Psoas muscle (tissue), 8 donors: ENCODE measurements at regions of chr2 and their contacts with region 1.

Region 1: DNA sequence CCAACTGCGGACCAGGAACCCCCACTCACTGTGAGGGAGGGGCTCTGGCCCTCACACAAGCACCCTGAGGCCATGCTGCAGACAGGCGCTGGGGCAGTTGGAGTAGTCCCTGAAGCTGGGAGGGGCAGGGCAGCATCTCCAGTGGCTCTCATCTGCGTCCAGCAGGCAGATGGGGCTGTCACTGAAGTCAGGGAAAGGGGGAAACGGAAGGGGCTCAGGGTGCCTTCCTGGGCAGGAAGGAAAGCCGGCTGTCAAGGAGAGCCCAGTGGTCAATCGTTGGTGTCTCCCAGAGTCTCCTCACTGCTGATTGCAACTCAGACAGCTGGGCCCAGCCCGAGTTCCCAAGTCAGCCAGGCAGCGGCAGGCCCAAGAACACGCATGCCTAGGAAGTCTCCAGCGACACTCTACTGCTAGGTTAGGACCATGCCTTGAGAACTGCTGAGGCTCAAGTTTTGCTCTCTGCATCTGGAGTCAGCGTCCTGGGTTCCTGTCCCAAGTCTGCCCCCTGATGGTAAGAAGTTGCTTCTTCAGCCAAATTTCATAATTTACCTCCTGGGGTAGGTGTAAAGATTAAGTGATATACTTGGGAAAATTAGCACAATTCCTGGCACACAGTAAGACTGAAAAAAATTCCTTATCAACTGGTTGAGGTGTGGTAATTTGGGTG is 27.5 kb upstream of the NMUR1 start:
- DNase-seq: peak; percentile 36 to 86
- ATAC-seq: peak; percentile 92 to 98 (median 96)
- H3K4me3 ChIP-seq: no peak overlapping the region
- H3K27ac ChIP-seq: peak overlapping the region; percentile 36
- H3K4me1 ChIP-seq: peaks cover 3% of the 10 kb centered on the region
- H3K27me3 ChIP-seq: no peaks in the 10 kb centered on the region
- CTCF ChIP-seq: peak; percentile 74

Region 2: DNA sequence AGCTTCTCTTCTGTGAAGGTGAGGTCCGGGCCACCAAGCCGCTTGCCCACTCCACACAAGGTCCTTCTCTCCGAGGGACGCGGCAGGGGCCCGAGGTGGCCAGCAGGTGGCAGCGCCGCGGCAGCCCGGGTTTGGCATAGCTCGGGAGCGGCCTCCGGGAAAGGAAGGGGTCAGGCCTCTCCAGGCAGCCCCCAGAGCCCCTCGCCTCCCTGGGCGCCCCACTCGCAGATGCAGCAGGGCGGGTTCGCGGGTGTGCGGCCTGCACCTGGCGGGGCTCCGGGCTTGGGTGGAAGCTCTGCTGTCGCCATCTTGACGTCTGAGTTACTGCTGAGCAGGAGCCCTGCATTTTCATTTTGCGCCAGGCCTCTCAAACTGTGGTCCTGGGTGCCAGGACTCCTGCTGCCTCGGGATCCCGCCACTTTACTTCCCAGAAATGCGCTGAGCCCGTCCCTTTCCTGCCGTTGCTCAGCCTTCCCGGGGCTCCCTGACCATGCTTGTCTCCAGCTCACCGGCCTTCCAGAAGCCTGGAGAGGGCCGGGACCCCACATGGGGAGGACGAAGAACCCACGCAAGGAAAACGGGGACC is 74.8 kb before region 1 on chr2:
- intact Hi-C with region 1: loop called (anchors 2 to 5 kb)
- DNase-seq: peak; percentile 81 to 88
- ATAC-seq: peak; percentile 91 to 99 (median 94)
- H3K4me3 ChIP-seq: peak overlapping the region; percentile 77
- H3K27ac ChIP-seq: peak overlapping the region; percentile 72
- H3K4me1 ChIP-seq: no peaks in the 10 kb centered on the region
- H3K27me3 ChIP-seq: no peaks in the 10 kb centered on the region
- CTCF ChIP-seq: peak; percentile 93

Region 3: DNA sequence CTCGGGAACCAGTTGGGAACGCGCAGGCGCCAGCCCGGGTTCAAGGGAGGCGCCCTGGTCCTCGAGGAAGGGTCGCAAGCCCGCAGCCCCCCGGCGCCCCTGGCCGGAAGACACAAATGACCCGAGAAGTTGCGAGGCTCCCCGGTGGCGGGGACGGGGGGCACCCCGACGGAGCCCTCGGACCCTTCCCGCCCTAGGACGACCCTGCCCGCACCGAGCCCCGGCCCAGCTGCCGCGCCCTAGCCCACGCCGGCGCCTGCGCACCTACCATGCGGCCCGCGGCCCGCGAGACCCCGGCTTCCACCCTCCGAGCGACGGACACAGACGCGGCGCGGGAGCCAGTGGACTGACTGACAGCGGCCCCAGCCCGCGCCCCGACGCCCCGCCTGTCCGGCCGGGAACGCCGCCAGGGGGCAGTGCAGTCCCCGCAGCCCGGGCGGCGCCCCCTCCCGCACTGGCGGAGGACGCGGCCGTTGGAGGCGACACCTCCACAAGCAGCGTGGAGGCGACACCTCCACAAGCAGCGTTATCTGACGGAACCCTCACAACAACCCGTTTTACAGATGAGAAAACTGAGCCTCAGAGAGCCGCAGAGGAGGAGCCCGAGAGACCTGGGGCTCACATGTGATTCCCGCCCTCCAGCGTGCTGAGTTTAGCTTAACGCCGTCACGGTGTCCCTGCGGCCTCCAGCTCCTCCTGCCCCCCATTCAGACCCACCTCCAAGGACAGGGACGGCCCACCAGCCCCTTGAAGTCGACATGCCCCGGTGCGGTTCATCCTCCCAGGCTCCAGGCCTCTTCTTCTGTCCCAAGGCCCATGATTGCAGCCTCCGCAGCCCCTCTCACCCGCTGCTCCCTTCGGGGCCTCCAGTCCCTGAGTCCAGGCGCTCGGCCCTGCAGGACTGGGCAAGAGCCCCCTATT is 27.4 kb before region 1 on chr2 and contains the start of gene NMUR1:
- intact Hi-C with region 1: loop called in 1 of 2 experiments (anchors 2 kb)
- DNase-seq: peak; percentile 69 to 82
- ATAC-seq: peak; percentile 74 to 92 (median 86)
- H3K4me3 ChIP-seq: peak within 1 kb of the TSS; percentile 62
- H3K27ac ChIP-seq: no peak within 1 kb of the TSS
- H3K4me1 ChIP-seq: no peaks in the 10 kb centered on the region
- H3K27me3 ChIP-seq: peaks cover 0 to 9% (median 0%) of the 10 kb centered on the region in 3 donors
- CTCF ChIP-seq: peak; percentile 73
- total RNA-seq, gene NMUR1: 0.06 to 0.10 (median 0.09) TPM in 3 of 4 donors, not detected in the other

Region 4: DNA sequence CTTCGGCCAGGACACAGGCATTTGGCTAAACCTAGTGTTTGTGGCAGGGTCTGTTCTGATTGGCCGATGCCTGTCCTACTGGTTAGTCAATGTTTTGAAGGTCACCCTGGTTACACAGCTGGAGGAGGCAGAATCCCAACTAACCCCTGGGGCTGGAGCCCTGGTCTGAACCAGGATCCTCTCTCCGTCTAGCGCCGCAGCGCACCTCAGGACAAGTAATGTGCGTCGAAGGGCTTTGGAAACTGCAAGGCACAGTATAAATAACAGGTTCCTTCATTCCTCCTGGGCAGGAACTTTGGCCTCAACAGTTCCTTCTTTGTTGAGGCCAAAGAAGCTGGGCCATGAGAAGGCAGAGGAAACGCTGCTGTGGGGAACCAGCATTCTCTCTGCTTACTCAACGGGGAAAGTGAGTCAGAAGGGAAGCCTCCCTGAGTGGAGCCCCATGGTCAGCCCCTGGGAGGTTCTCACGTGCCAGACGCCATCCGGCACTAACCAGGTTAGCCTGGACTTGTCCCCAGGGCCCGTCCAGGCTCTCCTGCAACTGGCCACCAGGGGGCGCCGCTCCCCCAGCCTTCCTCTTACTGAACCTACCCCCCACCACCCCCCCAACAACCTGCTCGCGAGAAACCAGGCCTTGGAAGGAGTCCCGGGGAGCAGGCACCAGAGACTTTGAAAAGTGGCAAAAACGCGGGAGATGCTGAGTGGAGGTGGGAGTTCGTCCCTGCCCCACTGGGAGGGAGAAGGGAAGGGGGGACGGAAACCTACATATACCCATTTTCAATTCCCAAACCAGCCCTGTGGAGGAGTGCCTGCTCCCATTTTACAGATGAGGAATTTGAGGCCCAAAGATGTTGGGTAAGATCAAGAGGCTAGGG is 54.7 kb after region 1 on chr2:
- intact Hi-C with region 1: no loop called
- DNase-seq: peak; percentile 94 to 97
- ATAC-seq: peak; percentile 79 to 86 (median 81)
- H3K4me3 ChIP-seq: peak overlapping the region; percentile 73
- H3K27ac ChIP-seq: peak overlapping the region; percentile 78
- H3K4me1 ChIP-seq: peaks cover 31% of the 10 kb centered on the region
- H3K27me3 ChIP-seq: no peaks in the 10 kb centered on the region
- CTCF ChIP-seq: peak; percentile 96